ENCODE measurements at regions of chr16 and their contacts with region 1.

Region 1: DNA sequence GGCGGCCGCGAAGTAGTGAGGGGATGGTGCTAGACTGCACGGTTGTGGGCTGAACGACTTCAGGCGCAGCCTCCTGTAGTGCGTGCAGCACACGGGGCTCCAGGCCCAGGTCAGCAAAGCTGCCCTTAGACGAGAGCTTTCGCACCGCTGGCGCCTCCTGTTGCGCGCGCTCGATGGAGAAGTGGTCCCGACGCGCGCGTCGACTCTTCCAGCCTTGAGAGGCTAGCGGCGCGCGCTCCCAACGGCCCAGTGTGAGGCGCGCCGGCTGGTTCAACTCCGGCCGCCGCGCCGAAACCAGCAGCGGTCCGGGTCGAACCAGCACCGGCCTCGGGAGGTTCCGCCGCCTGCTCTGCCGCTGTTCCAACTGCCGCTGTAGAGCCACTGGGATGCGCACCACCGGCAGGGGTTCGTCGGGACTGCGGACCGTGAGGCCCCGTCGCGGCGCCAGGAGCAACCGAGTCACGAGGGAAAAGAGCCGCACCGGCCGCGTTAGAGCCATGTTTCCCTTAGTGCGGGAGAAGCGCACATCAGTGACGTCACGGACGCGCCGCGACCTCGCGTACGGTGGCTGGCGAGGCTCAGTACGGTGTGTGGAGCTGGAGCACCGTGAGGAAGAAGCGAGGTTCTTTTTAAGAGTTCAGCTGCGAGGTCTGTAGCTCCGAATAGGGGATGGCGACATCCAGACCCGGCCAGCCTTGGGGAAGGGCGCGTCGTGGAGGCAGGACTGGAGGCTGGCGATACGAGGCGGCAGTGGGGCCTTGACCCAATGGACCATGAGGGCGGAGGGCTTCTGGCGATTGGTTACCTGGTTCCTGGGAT is at the starts of genes DDX28 and DUS2:
- DNase-seq: peak; percentile 95
- H3K4me3 ChIP-seq: peak within 1 kb of the TSS; percentile 84 to 94 (median 92)
- H3K27ac ChIP-seq: peak within 1 kb of the TSS; percentile 56
- H3K4me1 ChIP-seq: peaks cover 14% of the 10 kb centered on the region
- H3K27me3 ChIP-seq: no peaks in the 10 kb centered on the region
- CTCF ChIP-seq: no peak
- POLR2A ChIP-seq: peak; percentile 82
- total RNA-seq, gene DDX28: 7.9 and 8.4 TPM in 2 replicates
- total RNA-seq, gene DUS2: 20.3 and 21.7 TPM in 2 replicates

Region 2: DNA sequence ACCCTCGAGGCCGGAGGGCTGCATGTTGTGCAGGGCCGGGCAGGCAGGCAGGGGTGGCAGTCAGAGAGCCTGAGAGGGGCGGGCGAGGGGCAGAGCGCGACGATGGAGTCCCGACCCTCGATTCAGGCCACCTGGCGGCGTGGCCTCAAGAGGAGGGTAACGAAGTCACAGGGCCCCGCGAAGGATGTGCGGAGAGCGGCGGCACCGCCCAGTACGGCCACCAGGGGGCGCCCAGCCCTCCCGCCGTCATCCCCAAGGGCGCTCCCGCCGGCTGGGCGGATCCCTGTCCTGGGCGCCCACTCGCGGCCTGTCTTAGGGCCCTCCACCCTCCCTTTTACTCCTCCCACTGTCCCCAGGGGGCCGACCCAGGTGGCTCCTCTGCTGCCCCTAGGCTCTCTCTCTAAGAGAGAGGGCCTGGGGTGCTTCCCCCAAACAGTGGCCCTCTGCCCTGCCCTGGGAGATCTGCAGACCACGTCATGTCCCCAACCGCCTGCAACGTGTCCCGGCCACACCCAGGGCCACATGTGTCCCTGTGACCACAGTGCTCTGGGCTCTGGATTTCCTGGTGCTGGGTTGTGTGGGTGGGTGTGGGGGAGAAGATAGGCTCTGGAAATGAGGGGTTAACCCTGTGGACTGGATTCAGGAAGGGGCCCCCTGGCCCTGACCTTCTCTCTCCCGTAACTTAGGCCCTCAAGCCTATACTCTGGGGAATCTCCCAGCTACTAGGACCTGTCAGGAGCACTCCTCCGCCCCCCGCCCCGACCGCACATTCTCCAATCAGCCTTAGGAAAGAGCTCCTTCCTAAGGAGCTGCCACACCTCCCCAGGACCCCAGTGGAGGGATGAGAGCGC is 29.5 kb before region 1 on chr16:
- CTCF ChIA-PET with region 1: interaction called, 5 read pairs
- POLR2A ChIA-PET with region 1: no interaction called
- dilution Hi-C with region 1: no loop called
- intact Hi-C with region 1: loop called (anchors 1 kb)
- DNase-seq: peak; percentile 71
- H3K4me3 ChIP-seq: no peak overlapping the region
- H3K27ac ChIP-seq: peak overlapping the region; percentile 9
- H3K4me1 ChIP-seq: peaks cover 4% of the 10 kb centered on the region
- H3K27me3 ChIP-seq: no peaks in the 10 kb centered on the region
- CTCF ChIP-seq: peak; percentile 99
- POLR2A ChIP-seq: no peak